ENCODE measurements at regions of chr1 and their contacts with region 1.

Region 1: DNA sequence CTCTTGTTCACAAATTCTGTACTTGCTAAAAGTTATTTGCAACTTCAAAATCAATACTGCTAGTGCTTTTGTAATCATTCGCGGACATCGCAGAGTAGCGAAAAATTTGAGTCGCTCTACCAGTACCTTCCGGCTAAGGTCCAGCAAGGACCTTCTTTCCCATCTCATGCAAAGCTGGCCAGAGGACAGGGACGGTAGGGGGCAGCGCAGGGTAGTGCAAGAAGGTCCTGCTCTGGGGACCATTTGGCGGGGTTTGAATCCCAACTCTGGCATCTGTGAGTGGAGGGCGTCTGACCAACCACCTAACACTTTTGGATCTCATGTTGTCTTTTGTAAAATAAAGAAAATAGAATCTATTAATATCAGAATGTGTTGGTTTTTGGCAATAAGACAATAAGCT is 258.3 kb downstream of the SPATA17 start:
- DNase-seq: peak; percentile 42
- H3K4me3 Mint-ChIP-seq: no peak overlapping the region
- H3K27ac Mint-ChIP-seq: no peak overlapping the region
- H3K4me1 Mint-ChIP-seq: no peaks in the 10 kb centered on the region
- H3K27me3 Mint-ChIP-seq: no peaks in the 10 kb centered on the region
- CTCF ChIP-seq: peak; percentile 31

Region 2: GRCh38 chr1:217929213-217929885 is 39.9 kb after region 1 on chr1:
- CTCF ChIA-PET with region 1: no interaction called
- intact Hi-C with region 1: loop called (anchors 1 kb)
- DNase-seq: no peak
- H3K4me3 Mint-ChIP-seq: no peak overlapping the region
- H3K27ac Mint-ChIP-seq: no peak overlapping the region
- H3K4me1 Mint-ChIP-seq: no peaks in the 10 kb centered on the region
- H3K27me3 Mint-ChIP-seq: no peaks in the 10 kb centered on the region
- CTCF ChIP-seq: no peak

Region 3: GRCh38 chr1:217953922-217954321 is 64.5 kb after region 1 on chr1:
- CTCF ChIA-PET with region 1: no interaction called
- intact Hi-C with region 1: no loop called
- DNase-seq: peak; percentile 58
- H3K4me3 Mint-ChIP-seq: no peak overlapping the region
- H3K27ac Mint-ChIP-seq: no peak overlapping the region
- H3K4me1 Mint-ChIP-seq: peaks cover 16% of the 10 kb centered on the region
- H3K27me3 Mint-ChIP-seq: no peaks in the 10 kb centered on the region
- CTCF ChIP-seq: no peak

Region 4: DNA sequence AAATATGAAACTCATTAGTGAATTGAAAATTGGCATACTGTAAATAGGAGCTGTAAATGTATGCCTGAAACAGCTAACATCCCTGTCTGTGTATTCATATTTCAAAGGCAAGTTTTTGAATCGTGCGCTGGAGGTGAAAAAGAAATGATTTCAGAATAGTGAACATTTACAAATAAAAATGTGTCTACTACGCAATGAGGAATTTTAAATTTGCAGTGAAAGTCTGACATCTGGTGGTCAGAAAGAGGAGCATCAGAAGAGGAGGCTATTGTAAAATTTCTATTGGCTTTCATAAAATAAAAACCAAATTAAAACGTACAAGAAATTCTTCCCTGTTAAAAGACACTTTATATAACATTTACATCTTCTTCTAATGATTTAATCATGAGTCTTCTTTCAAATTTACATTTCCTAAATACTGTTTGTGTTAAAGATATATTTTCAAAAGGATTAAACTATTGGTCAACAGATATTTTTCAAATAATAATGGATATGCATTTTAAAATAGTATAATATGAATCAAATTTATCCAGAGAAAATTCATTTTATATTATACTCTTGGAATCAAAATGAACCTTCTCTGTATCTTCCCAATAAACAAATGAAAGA is 282.0 kb after region 1 on chr1:
- CTCF ChIA-PET with region 1: no interaction called
- intact Hi-C with region 1: loop called (anchors 1 kb)
- DNase-seq: no peak
- H3K4me3 Mint-ChIP-seq: no peak overlapping the region
- H3K27ac Mint-ChIP-seq: no peak overlapping the region
- H3K4me1 Mint-ChIP-seq: peaks cover under 1% of the 10 kb centered on the region
- H3K27me3 Mint-ChIP-seq: peaks cover 7% of the 10 kb centered on the region
- CTCF ChIP-seq: peak; percentile 65

Region 5: DNA sequence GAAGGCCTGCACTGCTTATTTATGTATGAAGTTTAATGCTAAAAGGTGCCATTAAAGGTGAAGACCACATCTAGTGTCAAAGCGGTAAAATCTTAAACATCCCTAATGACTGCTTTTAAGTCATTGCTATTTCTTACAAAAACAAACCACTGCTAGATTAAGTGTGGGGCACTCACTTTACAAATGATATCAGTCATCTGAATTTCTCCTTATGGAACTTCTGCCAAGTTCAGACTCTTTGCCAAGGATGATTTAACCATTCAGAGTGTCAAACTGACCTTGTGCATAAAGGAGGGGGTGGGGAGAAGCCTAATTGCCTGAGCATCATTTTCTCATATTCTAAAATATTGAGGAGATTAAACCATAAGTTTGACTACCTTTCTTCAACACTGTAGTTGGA is 727.3 kb after region 1 on chr1:
- CTCF ChIA-PET with region 1: no interaction called
- intact Hi-C with region 1: no loop called
- DNase-seq: no peak
- H3K4me3 Mint-ChIP-seq: no peak overlapping the region
- H3K27ac Mint-ChIP-seq: no peak overlapping the region
- H3K4me1 Mint-ChIP-seq: peaks cover 28% of the 10 kb centered on the region
- H3K27me3 Mint-ChIP-seq: no peaks in the 10 kb centered on the region
- CTCF ChIP-seq: no peak